Activated CD8-positive, alpha-beta memory T cell treated with anti-CD3 and anti-CD28 coated beads, Interleukin-2, amount 10 ng/mL, durations not matched to agents 7 days and 5 days (primary cell): ENCODE measurements at regions of chr19 and their contacts with region 1.

Region 1: DNA sequence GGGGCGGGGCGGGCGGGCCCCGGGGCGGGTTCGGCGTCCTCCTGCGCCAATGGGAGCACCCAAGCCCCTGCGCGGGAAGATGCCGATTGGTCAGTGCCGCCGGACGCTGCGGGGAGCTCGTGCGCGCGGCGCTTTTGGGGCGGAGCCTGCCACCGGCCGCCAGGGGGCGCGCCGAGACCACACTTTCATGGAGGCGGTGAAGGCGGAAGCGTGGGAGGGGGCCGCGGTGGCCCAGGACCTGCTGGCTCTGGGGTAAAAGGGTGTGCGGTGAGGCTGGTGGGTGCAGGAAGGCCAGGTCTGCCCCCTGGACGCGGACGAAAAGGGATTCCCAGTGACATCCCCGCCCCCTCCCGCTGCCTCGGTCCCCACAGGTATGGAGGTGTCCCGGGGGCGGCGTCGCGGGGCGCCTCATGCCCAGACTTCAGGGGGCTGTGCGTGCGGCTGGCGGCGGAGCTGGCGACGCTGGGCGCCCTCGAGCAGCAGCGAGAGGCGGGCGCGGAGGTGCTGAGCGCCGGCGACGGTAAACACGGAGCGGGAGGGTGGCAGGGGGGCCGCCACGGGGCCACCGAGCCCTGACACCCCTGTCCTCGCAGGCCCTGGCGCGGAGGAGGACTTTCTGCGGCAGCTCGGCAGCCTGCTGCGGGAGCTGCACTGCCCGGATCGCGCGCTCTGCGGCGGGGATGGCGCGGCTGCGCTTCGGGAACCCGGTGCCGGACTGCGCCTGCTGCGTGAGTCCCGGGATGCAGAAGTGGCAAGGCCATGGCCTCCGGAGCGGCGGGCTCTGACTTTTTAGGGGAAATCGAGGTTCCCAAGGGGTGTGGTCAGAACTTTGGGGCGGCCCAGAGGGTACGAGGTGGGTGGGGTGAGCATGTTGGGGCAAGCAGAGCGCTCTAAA is at the start of gene FAM98C:
- DNase-seq: peak; percentile 98
- ATAC-seq: peak; percentile 98
- H3K4me3 Mint-ChIP-seq: peak within 1 kb of the TSS; percentile 77
- H3K27ac Mint-ChIP-seq: peak within 1 kb of the TSS; percentile 90
- H3K4me1 Mint-ChIP-seq: peaks cover 13% of the 10 kb centered on the region
- H3K27me3 Mint-ChIP-seq: peaks cover 8% of the 10 kb centered on the region
- total RNA-seq, gene FAM98C: 22.4 to 24.1 TPM

Region 2: GRCh38 chr19:38233740-38234251 is 169.4 kb before region 1 on chr19:
- CTCF ChIA-PET with region 1: interaction called, 10 read pairs
- DNase-seq: peak; percentile 86
- ATAC-seq: peak; percentile 59
- H3K4me3 Mint-ChIP-seq: no peak overlapping the region
- H3K27ac Mint-ChIP-seq: no peak overlapping the region
- H3K4me1 Mint-ChIP-seq: peaks cover 5% of the 10 kb centered on the region
- H3K27me3 Mint-ChIP-seq: peaks cover 29% of the 10 kb centered on the region

Region 3: DNA sequence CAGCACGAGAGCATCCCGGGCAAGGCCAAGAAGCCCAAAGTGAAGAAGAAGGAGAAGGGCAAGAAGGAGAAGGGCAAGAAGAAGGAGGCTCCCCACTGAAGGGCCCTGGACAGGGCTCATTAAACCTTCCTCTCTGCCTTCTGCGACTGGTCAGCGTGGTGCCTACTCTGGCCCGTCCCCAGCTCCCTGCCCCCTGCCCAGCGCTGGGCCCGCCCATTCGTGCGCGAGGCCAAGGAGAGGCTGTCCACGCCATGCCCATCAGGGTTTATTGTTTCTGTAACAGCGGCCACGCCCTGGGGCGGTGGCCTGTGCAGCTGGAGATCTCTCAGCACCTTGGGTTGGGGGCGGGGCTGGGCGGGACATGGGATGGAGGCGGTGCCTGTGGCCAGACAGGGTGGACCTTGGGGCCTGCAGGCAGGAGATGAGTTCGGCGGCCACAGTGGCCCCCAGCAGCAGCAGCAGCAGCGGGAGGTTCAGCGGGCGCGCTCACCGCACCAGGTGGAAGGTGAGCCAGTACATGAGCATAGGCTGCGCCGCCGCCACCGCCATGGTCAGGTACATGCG is 98.3 kb before region 1 on chr19:
- CTCF ChIA-PET with region 1: no interaction called
- DNase-seq: no peak
- ATAC-seq: no peak
- H3K4me3 Mint-ChIP-seq: no peak overlapping the region
- H3K27ac Mint-ChIP-seq: no peak overlapping the region
- H3K4me1 Mint-ChIP-seq: no peaks in the 10 kb centered on the region
- H3K27me3 Mint-ChIP-seq: no peaks in the 10 kb centered on the region

Region 4: DNA sequence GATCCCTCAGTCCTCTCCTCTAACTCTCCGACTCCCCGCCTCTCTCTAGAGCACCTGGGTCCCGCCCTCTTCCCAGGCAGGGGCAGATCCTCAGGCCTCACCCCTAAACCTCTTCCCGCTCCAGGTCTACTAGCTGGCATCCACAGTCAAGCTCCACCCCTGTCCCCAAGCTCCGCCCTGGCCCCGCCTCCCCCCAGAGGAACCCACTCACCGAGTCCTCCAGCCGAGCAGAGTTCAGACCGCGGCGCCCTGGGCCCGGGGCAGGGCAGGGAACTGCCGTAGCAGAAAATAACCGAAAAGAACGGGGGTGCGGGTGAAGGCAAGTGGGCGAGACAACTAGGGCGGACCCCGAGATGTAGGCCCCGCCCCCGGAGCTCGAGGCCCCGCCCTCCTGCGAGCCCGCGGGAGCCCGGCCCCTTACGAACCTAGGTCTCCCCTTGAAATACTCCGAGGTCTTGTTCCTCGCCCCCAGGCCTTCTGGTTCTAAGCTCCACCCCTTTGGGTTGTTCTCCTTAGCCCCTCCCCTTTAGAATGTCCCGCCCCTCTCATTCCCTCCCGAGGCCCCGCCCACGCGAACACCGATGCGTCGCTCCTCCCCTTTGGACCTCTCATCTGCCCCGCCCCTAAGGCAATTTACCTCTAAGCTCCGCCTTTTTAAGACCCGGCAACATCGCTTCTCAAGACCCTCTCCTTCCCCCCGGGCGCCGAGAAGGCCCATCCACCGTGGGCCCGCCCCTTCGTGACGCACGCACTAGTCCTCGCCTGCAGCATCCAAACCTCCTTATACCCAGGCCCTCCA is 15.5 kb before region 1 on chr19 and contains the start of gene GGN:
- CTCF ChIA-PET with region 1: interaction called, 26 read pairs
- DNase-seq: peak; percentile 84
- ATAC-seq: peak; percentile 77
- H3K4me3 Mint-ChIP-seq: peak within 1 kb of the TSS; percentile 70
- H3K27ac Mint-ChIP-seq: peak within 1 kb of the TSS; percentile 44
- H3K4me1 Mint-ChIP-seq: peaks cover 16% of the 10 kb centered on the region
- H3K27me3 Mint-ChIP-seq: peaks cover 37% of the 10 kb centered on the region
- total RNA-seq, gene GGN: not detected

Region 5: DNA sequence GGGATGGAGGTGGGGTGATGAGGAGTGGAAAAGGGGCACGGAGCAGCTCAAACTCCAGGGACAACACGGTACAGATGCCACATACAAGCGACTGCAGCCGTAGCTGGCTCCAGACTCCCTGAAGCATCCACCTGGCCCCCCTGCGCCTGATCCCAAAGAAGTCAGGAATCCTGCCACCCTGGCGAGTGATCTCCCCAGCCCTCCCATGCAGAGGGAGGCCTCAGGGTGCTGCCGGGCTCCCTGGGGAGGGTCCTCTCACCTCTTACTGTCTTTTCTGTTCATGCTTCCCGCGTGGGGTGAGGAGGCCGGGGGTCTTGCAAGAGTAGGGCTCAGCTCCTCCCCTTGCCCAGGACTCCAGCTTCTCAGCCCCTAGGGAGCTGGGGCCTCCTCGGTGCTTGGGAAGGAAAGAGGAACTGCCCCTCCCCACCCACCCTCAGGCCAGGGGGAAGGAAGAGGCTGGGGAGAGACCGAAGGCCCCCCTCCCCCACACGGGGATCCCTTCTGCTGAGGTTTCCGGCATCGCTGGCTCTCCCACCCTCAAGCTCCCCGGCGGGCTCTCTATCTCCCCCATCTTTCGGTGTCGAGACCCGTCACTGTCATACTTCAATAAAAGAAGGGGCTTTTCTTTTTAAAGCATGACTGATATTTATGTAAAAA is 22.7 kb after region 1 on chr19 and contains the start of gene RASGRP4:
- CTCF ChIA-PET with region 1: interaction called, 15 read pairs
- DNase-seq: peak; percentile 58
- ATAC-seq: peak; percentile 50
- H3K4me3 Mint-ChIP-seq: peak within 1 kb of the TSS; percentile 10
- H3K27ac Mint-ChIP-seq: peak within 1 kb of the TSS; percentile 42
- H3K4me1 Mint-ChIP-seq: peaks cover 24% of the 10 kb centered on the region
- H3K27me3 Mint-ChIP-seq: peaks cover 6% of the 10 kb centered on the region
- total RNA-seq, gene RASGRP4: 1.4 to 1.6 TPM

Region 6: DNA sequence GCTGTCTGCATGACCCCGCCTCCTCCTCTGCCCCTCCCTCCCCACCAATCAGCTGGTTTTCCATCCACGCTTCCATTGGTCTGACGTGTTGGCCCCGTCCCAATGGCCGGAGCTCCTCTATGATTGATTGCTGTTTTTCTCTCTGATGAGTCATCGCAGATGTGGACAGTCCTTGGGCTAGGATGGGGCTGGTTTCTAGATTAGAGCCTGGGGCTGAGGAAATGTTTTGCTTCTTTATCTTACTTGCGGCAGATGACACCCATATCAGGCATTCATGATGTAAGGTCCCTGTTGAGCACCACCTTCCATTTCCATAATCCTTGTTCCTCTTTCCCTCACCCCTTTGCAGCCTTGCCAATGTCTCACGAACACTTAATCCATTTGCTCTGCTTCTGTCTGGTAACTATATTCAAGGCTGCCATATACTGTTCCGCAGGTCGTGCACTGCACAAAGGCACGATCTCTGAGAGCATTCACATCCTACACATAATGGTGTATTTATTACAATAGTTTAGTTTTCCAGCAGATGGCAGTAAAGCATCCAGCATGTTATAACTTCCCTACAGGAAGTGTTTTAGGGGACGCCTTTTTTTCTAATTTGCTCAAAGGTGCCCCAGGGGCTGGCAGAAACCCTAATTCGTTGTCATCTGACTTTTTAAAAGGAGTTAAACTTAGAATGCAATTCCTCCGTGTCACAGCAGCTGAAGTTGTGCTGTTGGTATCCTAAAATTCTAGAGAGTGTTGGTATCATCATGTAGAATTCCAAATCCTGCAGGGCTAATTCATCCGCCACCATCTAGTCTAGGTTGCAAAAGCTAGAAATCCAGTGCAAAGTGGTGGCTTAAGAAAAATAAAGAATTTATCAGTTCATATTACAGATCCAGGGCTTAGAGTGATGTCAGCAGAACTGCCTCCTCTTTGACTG is 141.1 kb after region 1 on chr19:
- CTCF ChIA-PET with region 1: interaction called, 10 read pairs
- DNase-seq: peak; percentile 64
- ATAC-seq: peak; percentile 93
- H3K4me3 Mint-ChIP-seq: peak overlapping the region; percentile 19
- H3K27ac Mint-ChIP-seq: peak overlapping the region; percentile 71
- H3K4me1 Mint-ChIP-seq: peaks cover 28% of the 10 kb centered on the region
- H3K27me3 Mint-ChIP-seq: no peaks in the 10 kb centered on the region

Region 7: GRCh38 chr19:38736036-38736412 is 332.8 kb after region 1 on chr19:
- CTCF ChIA-PET with region 1: interaction called, 11 read pairs
- DNase-seq: peak; percentile 77
- ATAC-seq: peak; percentile 57
- H3K4me3 Mint-ChIP-seq: peak overlapping the region; percentile 61
- H3K27ac Mint-ChIP-seq: peak overlapping the region; percentile 46
- H3K4me1 Mint-ChIP-seq: peaks cover 55% of the 10 kb centered on the region
- H3K27me3 Mint-ChIP-seq: peaks cover 4% of the 10 kb centered on the region

Region 8: GRCh38 chr19:38929929-38930775 is 526.9 kb after region 1 on chr19 and contains the start of gene SARS2:
- CTCF ChIA-PET with region 1: interaction called, 42 read pairs
- DNase-seq: peak; percentile 95
- ATAC-seq: peak; percentile 69
- H3K4me3 Mint-ChIP-seq: peak within 1 kb of the TSS; percentile 86
- H3K27ac Mint-ChIP-seq: peak within 1 kb of the TSS; percentile 99
- H3K4me1 Mint-ChIP-seq: peaks cover 53% of the 10 kb centered on the region
- H3K27me3 Mint-ChIP-seq: no peaks in the 10 kb centered on the region
- total RNA-seq, gene SARS2: 45.7 to 46.4 TPM